PC-3 (cell line): ENCODE measurements at regions of chr3 and their contacts with region 1.

Region 1: GRCh38 chr3:55180936-55181535 is 253.2 kb upstream of the LRTM1 start:
- DNase-seq: peak; percentile 73
- ATAC-seq: peak; percentile 46
- H3K4me3 ChIP-seq: no peak overlapping the region
- H3K27ac ChIP-seq: no peak overlapping the region
- H3K4me1 ChIP-seq: no peaks in the 10 kb centered on the region
- H3K27me3 ChIP-seq: peaks cover 8% of the 10 kb centered on the region
- CTCF ChIP-seq: peak; percentile 84

Region 2: GRCh38 chr3:54830658-54831057 is 350.4 kb before region 1 on chr3:
- CTCF ChIA-PET with region 1: no interaction called
- POLR2A ChIA-PET with region 1: no interaction called
- intact Hi-C with region 1: loop called (anchors 1 kb)
- DNase-seq: peak; percentile 75
- ATAC-seq: peak; percentile 55
- H3K4me3 ChIP-seq: no peak overlapping the region
- H3K27ac ChIP-seq: no peak overlapping the region
- H3K4me1 ChIP-seq: no peaks in the 10 kb centered on the region
- H3K27me3 ChIP-seq: no peaks in the 10 kb centered on the region
- CTCF ChIP-seq: peak; percentile 75

Region 3: GRCh38 chr3:54853573-54854404 is 327.2 kb before region 1 on chr3:
- CTCF ChIA-PET with region 1: no interaction called
- POLR2A ChIA-PET with region 1: no interaction called
- intact Hi-C with region 1: loop called (anchors 1 kb)
- DNase-seq: peak; percentile 62
- ATAC-seq: peak; percentile 93
- H3K4me3 ChIP-seq: no peak overlapping the region
- H3K27ac ChIP-seq: no peak overlapping the region
- H3K4me1 ChIP-seq: peaks cover 13% of the 10 kb centered on the region; the same call in 1 of the 2 replicates
- H3K27me3 ChIP-seq: peaks cover 28% of the 10 kb centered on the region
- CTCF ChIP-seq: peak; percentile 95

Region 4: DNA sequence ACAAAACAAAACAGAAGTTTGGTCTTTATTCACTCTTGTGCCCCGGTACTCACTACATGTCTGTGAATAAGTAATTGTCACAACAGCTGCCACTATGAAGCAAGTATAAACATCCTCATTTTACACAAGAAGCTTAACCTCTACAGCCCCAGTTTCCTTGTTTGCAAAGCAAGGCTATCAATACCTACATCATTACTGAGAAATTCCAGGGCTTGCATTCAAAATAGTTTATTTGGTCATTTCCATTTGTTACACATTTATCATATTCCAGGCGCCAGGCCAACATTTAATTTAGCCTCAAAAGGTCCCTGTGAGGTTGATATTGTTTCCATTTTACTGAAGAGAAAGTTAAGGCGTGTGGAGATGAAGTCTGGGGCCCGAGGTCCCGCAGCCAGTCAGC is 91.8 kb before region 1 on chr3:
- CTCF ChIA-PET with region 1: no interaction called
- POLR2A ChIA-PET with region 1: no interaction called
- intact Hi-C with region 1: no loop called
- DNase-seq: no peak
- ATAC-seq: no peak
- H3K4me3 ChIP-seq: no peak overlapping the region
- H3K27ac ChIP-seq: no peak overlapping the region
- H3K4me1 ChIP-seq: no peaks in the 10 kb centered on the region
- H3K27me3 ChIP-seq: peaks cover 31% of the 10 kb centered on the region
- CTCF ChIP-seq: no peak

Region 5: GRCh38 chr3:55453886-55454496 is 273.0 kb after region 1 on chr3:
- CTCF ChIA-PET with region 1: no interaction called
- POLR2A ChIA-PET with region 1: no interaction called
- intact Hi-C with region 1: loop called (anchors 10 kb)
- DNase-seq: no peak
- ATAC-seq: no peak
- H3K4me3 ChIP-seq: no peak overlapping the region
- H3K27ac ChIP-seq: no peak overlapping the region
- H3K4me1 ChIP-seq: peaks cover 7% of the 10 kb centered on the region; the same call in 1 of the 2 replicates
- H3K27me3 ChIP-seq: no peaks in the 10 kb centered on the region
- CTCF ChIP-seq: no peak